Activated CD8-positive, alpha-beta T cell treated with anti-CD3 and anti-CD28 coated beads, Interleukin-2, amount 10 ng/mL, durations not matched to agents 7 days and 5 days (primary cell): ENCODE measurements at regions of chr6 and their contacts with region 1.

Region 1: GRCh38 chr6:33248925-33249731 is 22.5 kb downstream of the VPS52 start:
- DNase-seq: peak; percentile 98
- ATAC-seq: peak; percentile 95
- H3K4me3 Mint-ChIP-seq: peak overlapping the region; percentile 88
- H3K27ac Mint-ChIP-seq: peak overlapping the region; percentile 92
- H3K4me1 Mint-ChIP-seq: peaks cover 37% of the 10 kb centered on the region
- H3K27me3 Mint-ChIP-seq: peaks cover 3% of the 10 kb centered on the region

Region 2: GRCh38 chr6:33118525-33119123 is 130.5 kb before region 1 on chr6:
- CTCF ChIA-PET with region 1: interaction called, 135 read pairs
- POLR2A ChIA-PET with region 1: interaction called, 3 read pairs
- DNase-seq: peak; percentile 51
- ATAC-seq: peak; percentile 61
- H3K4me3 Mint-ChIP-seq: no peak overlapping the region
- H3K27ac Mint-ChIP-seq: no peak overlapping the region
- H3K4me1 Mint-ChIP-seq: peaks cover 17% of the 10 kb centered on the region
- H3K27me3 Mint-ChIP-seq: peaks cover 52% of the 10 kb centered on the region

Region 3: DNA sequence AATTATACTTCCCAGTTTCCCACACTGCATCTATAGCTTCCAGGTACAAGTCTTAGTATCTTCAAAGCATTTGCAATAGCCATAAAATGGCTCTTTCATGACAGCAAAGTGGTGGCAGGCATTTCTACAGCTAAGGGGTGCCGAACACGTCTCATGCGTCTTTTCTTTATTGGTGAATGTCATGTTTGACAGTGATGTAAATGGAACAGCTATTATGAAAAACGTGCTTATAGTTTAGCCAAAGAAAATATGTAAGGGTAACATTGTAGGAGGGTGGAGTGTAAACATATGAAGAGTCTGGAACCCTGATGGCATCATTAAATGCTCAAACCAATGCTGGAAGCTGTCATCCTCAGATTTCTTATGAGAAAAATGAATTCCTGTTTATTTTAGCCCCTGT is 94.8 kb before region 1 on chr6:
- CTCF ChIA-PET with region 1: interaction called, 105 read pairs
- POLR2A ChIA-PET with region 1: no interaction called
- DNase-seq: no peak
- ATAC-seq: no peak
- H3K4me3 Mint-ChIP-seq: no peak overlapping the region
- H3K27ac Mint-ChIP-seq: no peak overlapping the region
- H3K4me1 Mint-ChIP-seq: no peaks in the 10 kb centered on the region
- H3K27me3 Mint-ChIP-seq: peaks cover 16% of the 10 kb centered on the region

Region 4: GRCh38 chr6:33183071-33183683 is 66.0 kb before region 1 on chr6:
- CTCF ChIA-PET with region 1: interaction called, 13 read pairs
- POLR2A ChIA-PET with region 1: interaction called, 6 read pairs
- DNase-seq: no peak
- ATAC-seq: peak; percentile 32
- H3K4me3 Mint-ChIP-seq: peak overlapping the region; percentile 39
- H3K27ac Mint-ChIP-seq: peak overlapping the region; percentile 97
- H3K4me1 Mint-ChIP-seq: peaks cover 24% of the 10 kb centered on the region
- H3K27me3 Mint-ChIP-seq: peaks cover 12% of the 10 kb centered on the region

Region 5: DNA sequence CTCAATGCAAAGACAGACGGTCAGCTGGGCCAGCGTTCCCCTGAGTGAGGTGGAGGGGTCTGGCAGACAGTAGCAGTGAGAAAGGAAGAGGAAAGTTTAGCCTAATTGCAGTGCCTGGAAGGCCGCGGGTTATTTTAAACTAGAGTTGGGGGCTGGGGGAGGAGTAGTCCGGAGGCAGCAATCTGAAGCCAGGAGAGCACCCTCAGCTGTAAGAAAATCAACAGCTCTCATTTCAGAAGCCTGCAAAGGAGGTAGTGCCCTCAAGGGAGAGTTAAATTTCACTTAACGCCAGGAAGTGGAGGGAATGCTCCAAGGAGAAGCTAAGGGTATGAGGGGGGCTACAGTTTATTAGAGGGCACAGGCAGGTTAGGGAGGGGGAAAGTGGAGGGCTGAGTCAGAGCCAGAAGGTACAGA is 13.9 kb before region 1 on chr6:
- CTCF ChIA-PET with region 1: interaction called, 20 read pairs
- POLR2A ChIA-PET with region 1: no interaction called
- DNase-seq: no peak
- ATAC-seq: no peak
- H3K4me3 Mint-ChIP-seq: no peak overlapping the region
- H3K27ac Mint-ChIP-seq: no peak overlapping the region
- H3K4me1 Mint-ChIP-seq: peaks cover under 1% of the 10 kb centered on the region
- H3K27me3 Mint-ChIP-seq: peaks cover 25% of the 10 kb centered on the region

Region 6: GRCh38 chr6:33276864-33277662 is 27.9 kb after region 1 on chr6 and contains the start of gene B3GALT4:
- CTCF ChIA-PET with region 1: interaction called, 15 read pairs
- POLR2A ChIA-PET with region 1: interaction called, 30 read pairs
- DNase-seq: peak; percentile 81
- ATAC-seq: peak; percentile 74
- H3K4me3 Mint-ChIP-seq: peak within 1 kb of the TSS; percentile 99
- H3K27ac Mint-ChIP-seq: peak within 1 kb of the TSS; percentile 97
- H3K4me1 Mint-ChIP-seq: peaks cover 64% of the 10 kb centered on the region
- H3K27me3 Mint-ChIP-seq: no peaks in the 10 kb centered on the region
- total RNA-seq, gene B3GALT4: 12.2 to 12.8 TPM

Region 7: GRCh38 chr6:33904050-33904746 is 655.1 kb after region 1 on chr6:
- CTCF ChIA-PET with region 1: no interaction called
- POLR2A ChIA-PET with region 1: no interaction called
- DNase-seq: peak; percentile 97
- ATAC-seq: peak; percentile 90
- H3K4me3 Mint-ChIP-seq: peak overlapping the region; percentile 77
- H3K27ac Mint-ChIP-seq: peak overlapping the region; percentile 93
- H3K4me1 Mint-ChIP-seq: peaks cover 84% of the 10 kb centered on the region
- H3K27me3 Mint-ChIP-seq: no peaks in the 10 kb centered on the region

Region 8: DNA sequence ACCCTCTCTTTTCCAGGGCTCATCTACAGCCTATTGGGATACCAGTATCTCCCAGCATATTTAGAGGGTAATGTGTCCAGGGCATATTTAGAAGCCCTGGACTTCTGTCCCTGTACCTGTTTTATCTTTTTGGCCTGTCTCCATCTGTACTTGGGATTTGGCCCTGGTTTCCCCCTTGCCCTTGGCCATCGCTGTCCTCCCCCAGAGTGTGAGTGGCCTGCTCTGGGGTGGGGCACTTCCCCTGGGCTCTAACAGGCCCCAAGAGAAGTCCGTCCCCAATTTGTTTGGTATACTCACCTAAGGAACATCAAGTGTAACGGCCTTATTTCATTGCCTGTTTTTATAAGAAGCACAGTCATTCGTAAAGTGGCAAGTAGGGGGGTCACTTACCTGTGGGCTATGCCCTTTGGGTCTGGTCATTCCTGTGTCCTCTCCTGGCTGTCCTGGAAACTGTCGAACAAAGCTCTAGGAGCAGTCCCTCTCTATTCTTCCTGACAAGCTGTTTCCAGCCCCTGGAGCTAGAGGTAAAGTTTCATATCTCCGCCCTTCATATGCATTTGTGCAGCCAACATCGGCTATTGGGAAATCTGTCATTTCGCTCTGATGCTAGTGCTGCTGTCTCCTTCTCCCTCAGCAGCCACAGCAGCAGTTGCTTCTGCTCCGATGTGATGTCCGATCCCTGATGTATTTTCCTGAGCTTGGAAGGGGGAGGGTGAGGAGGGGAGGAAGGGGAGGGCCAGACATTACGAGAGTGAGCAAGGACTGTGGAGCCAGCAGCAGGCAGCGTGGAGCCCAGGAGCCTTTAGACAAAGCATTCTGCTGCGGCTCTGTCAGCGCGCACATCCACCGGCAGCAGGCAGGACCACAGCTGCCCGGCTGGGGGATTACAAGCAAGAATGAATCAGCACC is 1808.6 kb after region 1 on chr6:
- CTCF ChIA-PET with region 1: no interaction called
- POLR2A ChIA-PET with region 1: no interaction called
- DNase-seq: no peak
- ATAC-seq: no peak
- H3K4me3 Mint-ChIP-seq: no peak overlapping the region
- H3K27ac Mint-ChIP-seq: no peak overlapping the region
- H3K4me1 Mint-ChIP-seq: peaks cover 32% of the 10 kb centered on the region
- H3K27me3 Mint-ChIP-seq: no peaks in the 10 kb centered on the region